Breast epithelium (tissue), 4 donors: ENCODE measurements at regions of chr1 and their contacts with region 1.

Region 1: GRCh38 chr1:37038227-37039076 is 4.1 kb upstream of the GRIK3 start:
- DNase-seq: peak; percentile 50 to 63
- H3K4me3 ChIP-seq: no peak overlapping the region
- H3K27ac ChIP-seq: peak overlapping the region; percentile 65 to 66
- H3K4me1 ChIP-seq: peaks cover 0 to 1% of the 10 kb centered on the region in 2 donors
- H3K27me3 ChIP-seq: peaks cover 0 to 35% of the 10 kb centered on the region in 2 donors
- CTCF ChIP-seq: peak in 1 of 3 donors; percentile 18
- POLR2A ChIP-seq: no peak

Region 2: DNA sequence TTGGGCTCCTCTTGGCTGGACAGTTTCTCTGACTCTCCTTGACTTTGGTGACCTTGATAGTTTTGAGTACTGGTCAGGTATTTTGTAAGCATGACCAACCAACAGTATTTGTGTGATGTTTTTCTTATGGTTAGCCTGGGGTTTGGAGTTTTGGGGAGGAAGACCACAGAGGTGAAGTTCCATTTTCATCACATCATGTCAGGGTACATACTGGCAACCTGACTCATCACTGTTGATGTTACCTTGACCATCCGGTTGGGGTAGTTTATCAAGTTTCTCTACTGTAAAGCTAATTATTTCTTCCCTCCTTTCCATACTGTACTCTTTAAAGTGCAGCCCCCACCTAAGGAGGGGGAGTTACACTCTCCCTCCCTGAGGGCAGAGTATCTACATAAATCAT is 601.6 kb before region 1 on chr1:
- intact Hi-C with region 1: loop called (anchors 5 kb)
- DNase-seq: no peak
- H3K4me3 ChIP-seq: no peak overlapping the region
- H3K27ac ChIP-seq: peak overlapping the region in 1 of 2 donors; percentile 43
- H3K4me1 ChIP-seq: no peaks in the 10 kb centered on the region
- H3K27me3 ChIP-seq: no peaks in the 10 kb centered on the region
- CTCF ChIP-seq: no peak
- POLR2A ChIP-seq: no peak

Region 3: DNA sequence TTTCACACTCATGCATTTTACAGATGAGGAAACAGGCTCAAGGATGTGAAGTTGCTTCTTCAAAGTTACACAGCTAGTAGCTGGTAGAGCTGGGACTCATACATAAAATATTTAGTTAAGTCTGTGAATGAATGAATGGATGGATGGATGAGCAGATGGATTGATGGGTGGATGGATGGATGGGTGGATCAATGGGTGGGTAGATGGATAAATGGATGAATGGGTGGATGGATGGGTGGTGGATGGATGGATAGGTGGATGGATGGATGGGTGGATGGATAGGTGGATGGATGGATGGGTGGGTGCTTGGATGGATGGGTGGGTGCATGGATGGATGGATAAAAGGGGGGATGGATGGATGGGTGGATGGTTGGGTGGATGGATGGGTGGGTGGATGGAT is 245.0 kb before region 1 on chr1:
- intact Hi-C with region 1: loop called (anchors 2 kb)
- DNase-seq: no peak
- H3K4me3 ChIP-seq: no peak overlapping the region
- H3K27ac ChIP-seq: no peak overlapping the region
- H3K4me1 ChIP-seq: no peaks in the 10 kb centered on the region
- H3K27me3 ChIP-seq: peaks cover 0 to 25% of the 10 kb centered on the region in 2 donors
- CTCF ChIP-seq: no peak
- POLR2A ChIP-seq: no peak

Region 4: DNA sequence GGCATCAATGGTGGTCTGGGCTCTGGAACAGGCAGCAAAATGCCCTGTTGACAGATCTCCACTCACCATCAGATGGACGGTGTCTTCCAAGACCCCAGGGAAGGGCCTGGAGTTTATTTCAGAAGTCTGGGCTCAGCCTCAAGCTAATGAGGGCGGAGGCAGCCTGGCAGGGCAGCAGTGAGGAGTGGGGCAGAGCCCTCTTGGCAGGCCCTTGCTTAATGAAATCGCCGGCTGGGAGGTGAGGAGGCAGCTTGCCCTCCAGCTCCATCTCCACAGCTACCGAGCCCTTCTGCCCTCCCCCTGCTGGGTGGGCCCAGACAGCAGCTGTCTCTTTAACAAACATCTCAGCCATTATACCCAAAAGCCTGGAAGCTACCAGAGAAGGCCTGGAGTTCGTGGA is 17.9 kb after region 1 on chr1:
- intact Hi-C with region 1: loop called (anchors 1 kb)
- DNase-seq: no peak
- H3K4me3 ChIP-seq: no peak overlapping the region
- H3K27ac ChIP-seq: peak overlapping the region in 1 of 2 donors; percentile 33
- H3K4me1 ChIP-seq: no peaks in the 10 kb centered on the region
- H3K27me3 ChIP-seq: no peaks in the 10 kb centered on the region
- CTCF ChIP-seq: no peak
- POLR2A ChIP-seq: no peak